Calu3 (cell line): ENCODE measurements at regions of chr20 and their contacts with region 1.

Region 1: DNA sequence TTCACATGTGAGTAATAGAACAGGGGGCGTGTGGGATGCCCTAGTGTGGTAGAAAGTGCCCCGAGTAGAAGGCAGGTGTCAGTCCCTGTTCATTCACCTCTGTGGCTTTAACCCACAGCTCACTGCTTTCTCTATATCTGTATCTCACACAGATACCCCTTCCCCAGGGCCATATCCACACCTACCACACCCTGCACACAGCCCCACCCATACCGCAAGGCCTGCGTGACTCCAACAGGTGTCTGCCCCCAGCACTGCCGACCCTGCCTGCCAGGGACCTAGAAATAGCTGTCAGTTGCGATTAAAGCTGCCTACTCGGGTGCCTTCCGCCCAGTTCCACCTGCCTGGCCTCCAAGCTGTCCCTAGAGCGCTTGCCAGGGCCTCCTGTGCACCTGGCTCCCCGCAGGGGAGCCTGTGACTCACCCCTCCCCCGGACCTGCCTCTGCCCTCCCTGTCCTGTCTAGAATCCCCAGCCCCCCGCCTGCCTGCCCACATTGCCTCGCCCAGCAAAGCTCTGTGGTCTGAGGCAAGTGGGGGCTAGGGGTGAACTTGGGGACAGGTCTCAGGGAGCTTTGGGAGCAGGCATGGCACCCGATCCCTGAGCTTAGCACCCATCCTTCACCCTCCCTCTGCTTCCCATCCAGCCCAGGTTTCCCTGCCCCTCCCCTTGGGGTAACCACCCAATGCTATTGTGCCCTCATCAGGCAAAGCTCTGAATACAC is 38.3 kb upstream of the ID1 start:
- DNase-seq: peak; percentile 96
- H3K4me3 Mint-ChIP-seq: peak overlapping the region; percentile 61
- H3K27ac Mint-ChIP-seq: peak overlapping the region; percentile 18
- H3K4me1 Mint-ChIP-seq: peaks cover 71% of the 10 kb centered on the region
- H3K27me3 Mint-ChIP-seq: no peaks in the 10 kb centered on the region
- CTCF ChIP-seq: no peak

Region 2: GRCh38 chr20:31523361-31524283 is 43.2 kb before region 1 on chr20:
- CTCF ChIA-PET with region 1: interaction called, 11 read pairs
- intact Hi-C with region 1: no loop called
- DNase-seq: no peak
- H3K4me3 Mint-ChIP-seq: no peak overlapping the region
- H3K27ac Mint-ChIP-seq: no peak overlapping the region
- H3K4me1 Mint-ChIP-seq: no peaks in the 10 kb centered on the region
- H3K27me3 Mint-ChIP-seq: no peaks in the 10 kb centered on the region
- CTCF ChIP-seq: no peak

Region 3: DNA sequence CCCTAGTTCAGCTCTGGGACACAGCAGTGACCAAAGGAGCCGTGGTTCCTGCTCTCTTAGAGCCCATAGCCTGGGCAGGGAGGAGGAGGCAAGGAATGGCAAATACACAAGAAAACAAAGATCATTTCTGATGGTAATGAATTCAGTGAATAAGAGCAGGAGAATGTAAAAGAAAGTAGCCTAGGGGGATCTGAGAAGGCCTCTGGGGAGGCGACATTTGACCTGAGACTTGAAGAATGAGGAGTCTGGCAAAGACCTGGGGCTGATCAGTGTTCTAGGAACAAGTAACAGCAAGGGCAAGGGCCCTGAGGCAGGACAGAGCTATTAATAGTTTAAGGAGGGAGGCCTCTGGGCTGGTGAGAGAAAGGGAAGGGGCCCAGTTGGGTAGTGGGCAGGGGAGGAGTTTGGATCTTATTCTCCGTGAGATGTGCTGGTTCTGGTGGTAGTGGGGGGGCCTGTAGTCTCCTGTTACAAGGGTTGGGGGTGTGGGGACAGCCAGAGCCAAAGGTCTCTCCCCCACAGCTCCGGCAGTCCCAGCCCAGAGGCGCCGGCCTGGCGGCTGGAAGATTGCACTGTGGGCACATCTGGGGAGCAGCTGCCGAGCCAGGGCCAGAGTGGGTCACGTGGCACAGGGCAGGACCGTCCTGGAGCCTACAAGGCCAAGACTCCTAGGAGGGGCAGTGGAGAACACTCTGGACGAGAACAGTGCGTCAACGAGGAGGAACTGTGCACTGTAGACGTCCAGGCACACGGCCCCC is 29.0 kb after region 1 on chr20:
- CTCF ChIA-PET with region 1: interaction called, 27 read pairs
- intact Hi-C with region 1: loop called (anchors 2 kb)
- DNase-seq: peak; percentile 68
- H3K4me3 Mint-ChIP-seq: peak overlapping the region; percentile 75
- H3K27ac Mint-ChIP-seq: peak overlapping the region; percentile 80
- H3K4me1 Mint-ChIP-seq: peaks cover 48% of the 10 kb centered on the region
- H3K27me3 Mint-ChIP-seq: no peaks in the 10 kb centered on the region
- CTCF ChIP-seq: no peak

Region 4: GRCh38 chr20:31605031-31605901 is 38.4 kb after region 1 on chr20 and contains the start of gene ID1:
- CTCF ChIA-PET with region 1: interaction called, 1,048 read pairs
- intact Hi-C with region 1: no loop called
- DNase-seq: peak; percentile 99
- H3K4me3 Mint-ChIP-seq: peak within 1 kb of the TSS; percentile 98
- H3K27ac Mint-ChIP-seq: peak within 1 kb of the TSS; percentile 96
- H3K4me1 Mint-ChIP-seq: peaks cover 33% of the 10 kb centered on the region
- H3K27me3 Mint-ChIP-seq: peaks cover 11% of the 10 kb centered on the region
- CTCF ChIP-seq: no peak
- total RNA-seq, gene ID1: 347 and 431 TPM in 2 replicates

Region 5: GRCh38 chr20:31630187-31630790 is 63.5 kb after region 1 on chr20:
- CTCF ChIA-PET with region 1: interaction called, 11 read pairs
- intact Hi-C with region 1: no loop called
- DNase-seq: no peak
- H3K4me3 Mint-ChIP-seq: no peak overlapping the region
- H3K27ac Mint-ChIP-seq: no peak overlapping the region
- H3K4me1 Mint-ChIP-seq: no peaks in the 10 kb centered on the region
- H3K27me3 Mint-ChIP-seq: no peaks in the 10 kb centered on the region
- CTCF ChIP-seq: no peak